Right ventricle myocardium superior (tissue), 1 donor: ENCODE measurements at regions of chr18 and their contacts with region 1.

Region 1: GRCh38 chr18:27778441-27778840 is 398.5 kb downstream of the CDH2 start:
- DNase-seq: no peak
- ATAC-seq: peak; percentile 72

Region 2: DNA sequence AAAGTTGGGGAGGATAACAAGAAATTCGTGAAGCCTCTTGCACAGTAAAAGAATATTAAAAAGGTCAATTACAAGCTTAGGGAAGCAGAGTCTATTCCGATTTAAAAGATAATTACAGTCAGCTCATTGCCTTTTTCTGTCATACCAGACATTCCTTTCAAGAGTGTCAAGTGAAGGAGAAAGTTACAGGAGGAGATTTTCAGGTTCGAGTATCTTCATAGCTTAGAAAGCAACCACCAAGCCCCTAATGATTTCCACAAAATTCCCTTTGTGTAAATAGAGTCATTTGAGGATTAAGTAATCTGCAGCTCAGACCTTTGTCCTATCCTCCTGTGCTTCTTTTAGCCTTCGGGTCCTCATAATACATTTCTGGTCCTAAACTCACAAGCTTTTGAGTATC is 16.4 kb before region 1 on chr18:
- intact Hi-C with region 1: no loop called
- DNase-seq: no peak
- ATAC-seq: no peak

Region 3: GRCh38 chr18:28108814-28109213 is 330.4 kb after region 1 on chr18:
- intact Hi-C with region 1: no loop called
- DNase-seq: no peak
- ATAC-seq: peak; percentile 44

Region 4: GRCh38 chr18:28189400-28190239 is 411.2 kb after region 1 on chr18:
- intact Hi-C with region 1: loop called (anchors 10 kb)
- DNase-seq: no peak
- ATAC-seq: peak; percentile 58